ENCODE measurements at regions of chr15 and their contacts with region 1.

Region 1: GRCh38 chr15:71443538-71443937 is 328.3 kb downstream of the THSD4 start:
- DNase-seq: peak; percentile 66 to 87
- ATAC-seq: no peak
- H3K4me3 ChIP-seq: no peak overlapping the region
- H3K27ac ChIP-seq: no peak overlapping the region
- H3K4me1 ChIP-seq: peaks cover 0 to 8% of the 10 kb centered on the region in 2 donors
- H3K27me3 ChIP-seq: no peaks in the 10 kb centered on the region

Region 2: GRCh38 chr15:71011503-71012155 is 431.9 kb before region 1 on chr15:
- intact Hi-C with region 1: loop called (anchors 2 to 10 kb)
- DNase-seq: no peak
- ATAC-seq: no peak
- H3K4me3 ChIP-seq: no peak overlapping the region
- H3K27ac ChIP-seq: no peak overlapping the region
- H3K4me1 ChIP-seq: no peaks in the 10 kb centered on the region
- H3K27me3 ChIP-seq: no peaks in the 10 kb centered on the region

Region 3: GRCh38 chr15:71109130-71109529 is 334.4 kb before region 1 on chr15:
- intact Hi-C with region 1: loop called in 1 of 2 experiments (anchors 2 kb)
- DNase-seq: no peak
- ATAC-seq: peak; percentile 39
- H3K4me3 ChIP-seq: no peak overlapping the region
- H3K27ac ChIP-seq: no peak overlapping the region
- H3K4me1 ChIP-seq: no peaks in the 10 kb centered on the region
- H3K27me3 ChIP-seq: no peaks in the 10 kb centered on the region

Region 4: GRCh38 chr15:71386448-71387236 is 56.9 kb before region 1 on chr15:
- intact Hi-C with region 1: loop called in 1 of 2 experiments (anchors 2 kb)
- DNase-seq: no peak
- ATAC-seq: no peak
- H3K4me3 ChIP-seq: no peak overlapping the region
- H3K27ac ChIP-seq: no peak overlapping the region
- H3K4me1 ChIP-seq: peaks cover 1 to 12% of the 10 kb centered on the region in 2 donors
- H3K27me3 ChIP-seq: no peaks in the 10 kb centered on the region

Measured in aorta (tissue), 5 donors.